ENCODE measurements at regions of chr9 and their contacts with region 1.

Region 1: GRCh38 chr9:83649080-83649479 is 26.1 kb downstream of the IDNK start:
- DNase-seq: no peak
- H3K4me3 ChIP-seq: no peak overlapping the region
- H3K27ac ChIP-seq: no peak overlapping the region
- H3K27me3 ChIP-seq: no peaks in the 10 kb centered on the region
- CTCF ChIP-seq: peak; percentile 70

Region 2: DNA sequence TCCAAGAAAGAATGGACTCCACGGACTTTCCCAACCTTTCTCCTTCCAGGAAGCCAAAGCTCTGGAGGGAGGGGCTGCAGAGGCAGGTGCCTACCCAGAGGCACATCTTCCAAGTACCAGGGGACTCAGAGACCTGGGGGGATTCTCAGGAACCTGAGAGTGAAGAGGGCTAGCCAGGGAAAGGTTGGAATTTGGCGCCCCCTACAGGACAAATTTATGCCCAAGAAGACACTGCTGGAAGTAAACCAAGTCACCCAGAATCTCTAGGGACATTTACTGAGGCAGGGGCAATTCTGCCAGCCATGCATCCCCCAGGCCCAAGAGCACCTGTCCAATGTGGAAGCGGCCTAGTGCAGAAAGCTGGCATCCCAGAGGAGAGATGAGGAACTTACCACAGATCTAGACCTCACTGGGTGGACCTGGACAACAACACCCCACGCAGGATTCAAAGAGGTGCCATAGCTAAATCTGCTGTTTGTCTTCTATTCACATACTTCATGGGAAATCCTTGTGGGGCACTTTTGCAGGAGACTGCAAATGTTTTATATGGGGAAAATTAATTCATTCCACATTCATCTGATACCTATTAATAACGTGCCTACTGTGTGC is 52.1 kb before region 1 on chr9:
- CTCF ChIA-PET with region 1: no interaction called
- POLR2A ChIA-PET with region 1: no interaction called
- DNase-seq: no peak
- H3K4me3 ChIP-seq: no peak overlapping the region
- H3K27ac ChIP-seq: no peak overlapping the region
- H3K27me3 ChIP-seq: peaks cover 5% of the 10 kb centered on the region
- CTCF ChIP-seq: peak; percentile 45

Region 3: GRCh38 chr9:83620841-83621636 is 28.0 kb before region 1 on chr9:
- CTCF ChIA-PET with region 1: interaction called, 22 read pairs
- POLR2A ChIA-PET with region 1: no interaction called
- DNase-seq: no peak
- H3K4me3 ChIP-seq: no peak overlapping the region
- H3K27ac ChIP-seq: no peak overlapping the region
- H3K27me3 ChIP-seq: no peaks in the 10 kb centered on the region
- CTCF ChIP-seq: peak; percentile 77

Region 4: GRCh38 chr9:83636813-83637212 is 12.3 kb before region 1 on chr9:
- CTCF ChIA-PET with region 1: interaction called, 15 read pairs
- POLR2A ChIA-PET with region 1: no interaction called
- DNase-seq: no peak
- H3K4me3 ChIP-seq: no peak overlapping the region
- H3K27ac ChIP-seq: no peak overlapping the region
- H3K27me3 ChIP-seq: no peaks in the 10 kb centered on the region
- CTCF ChIP-seq: no peak

Region 5: DNA sequence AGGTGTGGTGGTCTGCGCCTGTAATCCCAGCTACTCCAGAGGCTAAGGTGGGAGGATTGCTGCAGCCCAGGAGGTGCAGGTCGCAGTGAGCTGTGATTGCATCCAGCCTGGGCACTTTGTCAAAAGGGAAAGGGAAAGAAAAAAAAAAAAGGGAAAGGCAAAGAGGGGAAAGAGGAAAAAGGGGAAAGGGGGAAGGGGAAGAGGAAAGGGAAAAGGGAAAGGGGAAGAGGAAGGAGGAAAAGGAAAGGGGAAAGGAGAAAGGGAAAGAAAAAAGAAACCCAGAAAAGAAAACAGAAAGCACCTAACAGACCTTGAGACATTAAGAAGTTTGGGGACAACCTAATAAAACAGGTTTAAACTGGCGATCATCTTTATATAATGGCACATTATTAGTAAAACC is 13.9 kb after region 1 on chr9:
- CTCF ChIA-PET with region 1: interaction called, 12 read pairs
- POLR2A ChIA-PET with region 1: no interaction called
- DNase-seq: no peak
- H3K4me3 ChIP-seq: no peak overlapping the region
- H3K27ac ChIP-seq: no peak overlapping the region
- H3K27me3 ChIP-seq: no peaks in the 10 kb centered on the region
- CTCF ChIP-seq: no peak

Region 6: DNA sequence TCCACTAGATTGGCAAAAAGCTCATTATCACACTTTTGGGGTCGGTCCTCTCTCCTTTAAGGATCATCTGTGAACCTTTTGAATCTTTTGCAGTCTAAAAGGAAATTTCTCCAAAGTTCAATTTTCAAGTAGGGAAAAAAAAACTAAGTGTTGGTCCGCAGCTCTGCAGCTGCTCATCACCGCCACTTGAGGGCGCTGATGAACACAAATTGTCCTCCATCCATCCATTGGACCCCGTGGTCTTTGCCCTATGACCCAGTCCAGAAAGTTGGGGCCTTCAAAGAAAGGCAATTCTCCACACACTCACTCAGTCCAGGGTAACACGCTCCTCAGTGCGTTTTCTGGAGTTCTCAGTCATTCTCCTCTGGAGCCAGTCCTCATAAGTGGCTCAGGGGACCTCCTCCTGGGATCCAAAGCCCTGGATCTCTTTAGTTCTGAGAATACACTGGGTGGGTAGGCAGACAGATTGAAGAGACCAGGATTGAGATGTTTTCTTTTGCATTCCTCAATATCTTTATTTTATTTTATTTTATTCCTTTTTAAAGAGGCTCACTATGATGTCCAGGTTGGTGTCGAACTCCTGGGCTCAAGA is 755.1 kb after region 1 on chr9:
- CTCF ChIA-PET with region 1: no interaction called
- POLR2A ChIA-PET with region 1: no interaction called
- DNase-seq: no peak
- H3K4me3 ChIP-seq: no peak overlapping the region
- H3K27ac ChIP-seq: no peak overlapping the region
- H3K27me3 ChIP-seq: no peaks in the 10 kb centered on the region
- CTCF ChIP-seq: peak; percentile 29

Measured in AG04450 (cell line).